Calu3 (cell line): ENCODE measurements at regions of chr9 and their contacts with region 1.

Region 1: GRCh38 chr9:126317513-126317912 is 9.1 kb upstream of the MVB12B start:
- DNase-seq: peak; percentile 34
- H3K4me3 Mint-ChIP-seq: no peak overlapping the region
- H3K27ac Mint-ChIP-seq: no peak overlapping the region
- H3K4me1 Mint-ChIP-seq: no peaks in the 10 kb centered on the region
- H3K27me3 Mint-ChIP-seq: peaks cover 52% of the 10 kb centered on the region
- CTCF ChIP-seq: no peak

Region 2: GRCh38 chr9:126292736-126293521 is 24.6 kb before region 1 on chr9:
- CTCF ChIA-PET with region 1: no interaction called
- intact Hi-C with region 1: no loop called
- DNase-seq: no peak
- H3K4me3 Mint-ChIP-seq: no peak overlapping the region
- H3K27ac Mint-ChIP-seq: no peak overlapping the region
- H3K4me1 Mint-ChIP-seq: no peaks in the 10 kb centered on the region
- H3K27me3 Mint-ChIP-seq: peaks cover 58% of the 10 kb centered on the region
- CTCF ChIP-seq: no peak

Region 3: GRCh38 chr9:126398403-126399058 is 81.0 kb after region 1 on chr9:
- CTCF ChIA-PET with region 1: no interaction called
- intact Hi-C with region 1: loop called (anchors 5 kb)
- DNase-seq: peak; percentile 69
- H3K4me3 Mint-ChIP-seq: no peak overlapping the region
- H3K27ac Mint-ChIP-seq: no peak overlapping the region
- H3K4me1 Mint-ChIP-seq: peaks cover 10% of the 10 kb centered on the region
- H3K27me3 Mint-ChIP-seq: no peaks in the 10 kb centered on the region
- CTCF ChIP-seq: peak; percentile 57

Region 4: DNA sequence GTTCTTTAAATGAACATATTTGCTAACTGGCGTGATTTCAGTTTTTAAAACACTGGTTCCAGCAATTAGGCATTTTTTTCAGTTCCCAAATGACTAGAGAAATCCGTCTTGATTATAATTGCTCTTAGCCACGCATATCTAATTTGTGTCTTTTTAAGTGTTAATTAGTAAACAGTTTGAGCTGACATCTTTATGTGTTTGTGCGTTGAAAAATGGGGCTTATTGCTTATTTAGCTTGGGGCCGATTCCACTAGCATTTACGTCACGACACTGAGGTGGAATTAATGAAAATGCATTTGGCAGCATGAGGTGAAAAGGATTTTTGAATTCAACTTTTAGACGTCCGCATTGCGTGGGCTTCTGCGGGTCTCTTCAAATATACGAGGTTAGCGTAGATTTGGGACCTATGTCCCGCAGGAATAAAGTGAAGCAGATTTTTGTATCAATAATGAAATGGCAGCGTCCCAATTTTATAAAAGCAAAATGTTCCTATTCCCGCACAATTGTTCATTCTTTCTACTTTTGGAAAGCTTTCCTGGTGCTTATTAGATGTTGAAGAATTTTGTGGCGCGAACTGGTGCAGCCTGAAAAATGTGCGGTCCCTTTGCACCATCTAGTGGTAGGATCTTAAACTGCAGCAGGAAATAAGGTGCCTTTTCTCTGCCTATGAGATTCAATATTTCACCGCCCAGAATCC is 173.5 kb after region 1 on chr9:
- CTCF ChIA-PET with region 1: no interaction called
- intact Hi-C with region 1: loop called (anchors 5 kb)
- DNase-seq: peak; percentile 59
- H3K4me3 Mint-ChIP-seq: no peak overlapping the region
- H3K27ac Mint-ChIP-seq: no peak overlapping the region
- H3K4me1 Mint-ChIP-seq: no peaks in the 10 kb centered on the region
- H3K27me3 Mint-ChIP-seq: no peaks in the 10 kb centered on the region
- CTCF ChIP-seq: peak; percentile 55

Region 5: GRCh38 chr9:126587187-126588185 is 270.0 kb after region 1 on chr9:
- CTCF ChIA-PET with region 1: no interaction called
- intact Hi-C with region 1: no loop called
- DNase-seq: no peak
- H3K4me3 Mint-ChIP-seq: no peak overlapping the region
- H3K27ac Mint-ChIP-seq: no peak overlapping the region
- H3K4me1 Mint-ChIP-seq: no peaks in the 10 kb centered on the region
- H3K27me3 Mint-ChIP-seq: peaks cover 64% of the 10 kb centered on the region
- CTCF ChIP-seq: no peak